Kidney (tissue), 22 donors: ENCODE measurements at regions of chr20 and their contacts with region 1.

Region 1: DNA sequence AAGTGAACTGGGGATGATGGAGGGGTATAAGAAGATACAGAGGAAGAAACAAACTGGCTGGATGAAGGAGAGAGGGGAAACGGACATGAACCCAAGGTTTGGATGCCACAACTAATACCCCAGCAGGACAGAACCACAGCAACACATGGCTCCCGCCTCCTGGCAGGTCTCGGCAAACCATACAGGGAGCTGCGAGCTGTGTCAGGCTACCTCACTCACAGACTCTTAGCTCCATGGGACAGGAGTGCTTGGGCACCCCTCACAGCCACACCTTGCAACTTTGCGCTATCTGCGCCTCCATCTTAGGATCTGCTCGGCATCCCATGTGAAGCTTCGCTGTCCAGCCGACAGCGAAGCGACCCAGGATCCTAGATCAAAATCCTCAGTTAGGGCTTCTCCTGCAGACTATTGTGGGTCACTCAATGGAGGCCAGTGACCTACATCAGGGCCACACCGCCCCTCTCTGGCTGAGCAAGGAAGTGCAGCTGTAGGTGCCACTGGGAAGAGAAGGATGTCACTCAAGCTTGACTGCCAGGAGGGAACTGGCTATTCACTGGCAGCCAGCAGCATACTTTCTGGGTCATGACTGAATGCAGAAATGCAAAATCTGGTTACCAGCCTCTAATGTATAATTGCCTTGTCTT is 174.4 kb upstream of the RIN2 start:
- DNase-seq: peak; percentile 84 to 88 (median 86)
- H3K4me3 ChIP-seq: no peak overlapping the region
- H3K27ac ChIP-seq: no peak overlapping the region
- H3K4me1 ChIP-seq: no peaks in the 10 kb centered on the region
- H3K27me3 ChIP-seq: no peaks in the 10 kb centered on the region
- CTCF ChIP-seq: peak; percentile 75

Region 2: DNA sequence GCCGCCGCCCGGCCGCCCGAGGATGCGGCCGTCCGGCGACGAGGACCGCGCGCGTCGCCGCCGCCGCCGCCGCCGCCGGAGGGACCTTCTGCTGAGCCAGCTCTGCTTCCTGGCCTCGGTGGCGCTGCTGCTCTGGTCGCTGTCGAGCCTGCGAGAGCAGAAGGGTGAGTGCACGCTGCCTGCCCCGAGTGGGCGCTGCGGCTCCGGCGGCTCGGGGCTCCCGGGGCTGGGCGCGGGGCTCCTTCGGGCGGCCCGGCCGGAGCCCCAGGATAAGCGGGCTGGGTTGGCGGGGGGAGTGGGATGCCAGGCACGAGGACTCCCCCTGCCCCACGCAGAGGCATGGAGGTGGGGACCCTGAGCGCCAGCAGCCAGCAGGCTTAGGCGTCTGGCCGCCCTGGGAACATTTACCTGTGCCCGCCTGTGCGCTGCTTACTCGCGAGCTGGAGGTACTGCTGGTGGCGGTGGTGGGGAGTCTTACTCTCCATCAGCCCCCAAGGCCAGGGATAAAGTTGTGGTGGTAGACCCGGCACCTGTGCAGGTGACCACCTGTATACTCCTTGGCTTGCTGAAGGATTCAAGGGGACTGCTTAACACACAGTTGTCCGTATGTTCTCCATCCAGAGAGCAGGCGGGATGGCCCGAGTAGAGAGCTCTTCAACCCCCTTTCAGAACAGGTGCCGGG is 370.7 kb before region 1 on chr20:
- intact Hi-C with region 1: loop called (anchors 10 kb)
- DNase-seq: peak; percentile 82 to 94 (median 86)
- H3K4me3 ChIP-seq: peak overlapping the region; percentile 9 to 54 (median 52)
- H3K27ac ChIP-seq: no peak overlapping the region
- H3K4me1 ChIP-seq: peaks cover 0 to 5% (median 0%) of the 10 kb centered on the region in 3 donors
- H3K27me3 ChIP-seq: peaks cover 12% of the 10 kb centered on the region
- CTCF ChIP-seq: peak; percentile 33

Region 3: GRCh38 chr20:19807191-19807945 is 223.7 kb after region 1 on chr20:
- intact Hi-C with region 1: no loop called
- DNase-seq: no peak
- H3K4me3 ChIP-seq: no peak overlapping the region
- H3K27ac ChIP-seq: no peak overlapping the region
- H3K4me1 ChIP-seq: peaks cover 0 to 11% (median 5%) of the 10 kb centered on the region in 3 donors
- H3K27me3 ChIP-seq: no peaks in the 10 kb centered on the region
- CTCF ChIP-seq: no peak